Naive thymus-derived CD8-positive, alpha-beta T cell (primary cell): ENCODE measurements at regions of chr2 and their contacts with region 1.

Region 1: GRCh38 chr2:131093006-131093695 is at the start of gene FAM168B:
- DNase-seq: peak; percentile 82 to 93 (median 90)
- ATAC-seq: peak; percentile 85 to 86
- H3K4me3 Mint-ChIP-seq: peak within 1 kb of the TSS; percentile 88 to 98 (median 94)
- H3K27ac Mint-ChIP-seq: peak within 1 kb of the TSS; percentile 90 to 98 (median 96)
- H3K4me1 Mint-ChIP-seq: peaks cover 5 to 34% (median 18%) of the 10 kb centered on the region in 4 donors
- H3K27me3 Mint-ChIP-seq: no peaks in the 10 kb centered on the region
- polyA plus RNA-seq, gene FAM168B: 29.9 to 43.8 (median 35.8) TPM

Region 2: GRCh38 chr2:131055169-131056065 is 37.7 kb before region 1 on chr2:
- POLR2A ChIA-PET with region 1: no interaction called
- DNase-seq: no peak
- ATAC-seq: no peak
- H3K4me3 Mint-ChIP-seq: no peak overlapping the region
- H3K27ac Mint-ChIP-seq: peak overlapping the region in 4 of 10 donors; percentile 27 to 46 (median 44)
- H3K4me1 Mint-ChIP-seq: peaks cover 16 to 41% (median 29%) of the 10 kb centered on the region in 4 donors
- H3K27me3 Mint-ChIP-seq: no peaks in the 10 kb centered on the region

Region 3: GRCh38 chr2:131105156-131105949 is 12.2 kb after region 1 on chr2 and contains the start of gene PLEKHB2:
- POLR2A ChIA-PET with region 1: interaction called, 69 read pairs
- DNase-seq: peak; percentile 87 to 97 (median 93)
- ATAC-seq: peak; percentile 72 to 74
- H3K4me3 Mint-ChIP-seq: peak within 1 kb of the TSS; percentile 88 to 100 (median 96)
- H3K27ac Mint-ChIP-seq: peak within 1 kb of the TSS; percentile 88 to 99 (median 97)
- H3K4me1 Mint-ChIP-seq: peaks cover 21 to 60% (median 56%) of the 10 kb centered on the region in 4 donors
- H3K27me3 Mint-ChIP-seq: no peaks in the 10 kb centered on the region
- polyA plus RNA-seq, gene PLEKHB2: 63.0 to 70.7 (median 65.7) TPM

Region 4: GRCh38 chr2:131125195-131125757 is 32.1 kb after region 1 on chr2:
- POLR2A ChIA-PET with region 1: no interaction called
- DNase-seq: no peak
- ATAC-seq: no peak
- H3K4me3 Mint-ChIP-seq: no peak overlapping the region
- H3K27ac Mint-ChIP-seq: peak overlapping the region in 3 of 10 donors; percentile 15 to 41 (median 16)
- H3K4me1 Mint-ChIP-seq: peaks cover 12 to 22% (median 16%) of the 10 kb centered on the region in 4 donors
- H3K27me3 Mint-ChIP-seq: no peaks in the 10 kb centered on the region

Region 5: DNA sequence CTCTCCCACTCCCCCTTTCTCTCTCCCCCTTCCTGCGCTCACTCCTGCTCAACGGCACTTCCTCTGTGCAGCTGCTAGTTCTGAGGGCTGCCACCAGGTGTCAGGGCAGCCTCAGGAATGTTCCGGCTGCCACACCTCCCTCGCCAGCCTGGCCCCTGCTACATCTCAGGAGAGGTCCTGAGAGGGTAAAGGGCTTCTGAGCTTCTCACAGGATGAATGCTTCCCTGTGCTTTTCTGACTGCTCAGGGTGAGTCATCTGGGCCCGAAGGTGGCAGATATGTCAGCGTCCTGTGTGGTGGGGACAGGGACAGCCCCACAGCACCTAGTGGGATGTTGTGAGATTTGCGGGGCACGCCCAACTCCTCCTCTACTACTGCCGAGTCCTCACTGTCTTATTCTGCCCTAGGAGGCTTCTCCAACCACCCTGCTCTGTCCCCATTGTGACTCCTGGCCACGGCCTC is 61.0 kb after region 1 on chr2:
- POLR2A ChIA-PET with region 1: no interaction called
- DNase-seq: peak; percentile 38 to 79 (median 58)
- ATAC-seq: peak; percentile 87 to 88
- H3K4me3 Mint-ChIP-seq: peak overlapping the region in 1 of 10 donors; percentile 45
- H3K27ac Mint-ChIP-seq: peak overlapping the region in 5 of 10 donors; percentile 0 to 53 (median 31)
- H3K4me1 Mint-ChIP-seq: peaks cover 7 to 26% (median 19%) of the 10 kb centered on the region in 4 donors
- H3K27me3 Mint-ChIP-seq: no peaks in the 10 kb centered on the region

Region 6: GRCh38 chr2:131201098-131201497 is 107.9 kb after region 1 on chr2:
- POLR2A ChIA-PET with region 1: no interaction called
- DNase-seq: no peak
- ATAC-seq: no peak
- H3K4me3 Mint-ChIP-seq: no peak overlapping the region
- H3K27ac Mint-ChIP-seq: no peak overlapping the region
- H3K4me1 Mint-ChIP-seq: no peaks in the 10 kb centered on the region
- H3K27me3 Mint-ChIP-seq: peaks cover 3 to 13% (median 3%) of the 10 kb centered on the region in 5 donors